Ascending aorta (tissue), 2 donors: ENCODE measurements at regions of chr16 and their contacts with region 1.

Region 1: DNA sequence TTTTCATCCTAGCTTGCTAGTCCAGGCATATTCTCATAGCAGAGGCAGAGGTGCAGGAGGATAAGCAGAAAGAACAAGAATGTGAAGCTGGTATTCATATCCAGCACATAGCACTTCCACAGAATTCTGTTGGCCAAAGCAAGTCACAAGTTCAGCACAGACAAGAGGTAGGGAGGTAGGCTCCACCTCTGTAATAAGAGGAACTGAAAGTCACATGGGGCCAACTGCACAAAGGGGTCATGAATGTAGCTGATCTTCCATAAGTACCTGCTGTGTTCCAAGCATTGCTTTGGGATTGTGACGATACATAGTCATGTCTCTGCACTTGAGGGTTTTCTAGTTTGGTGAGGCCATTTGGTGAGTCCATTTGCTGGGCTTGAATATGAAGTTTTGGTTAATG is 110.8 kb upstream of the MPHOSPH6 start:
- DNase-seq: no peak
- H3K4me3 ChIP-seq: no peak overlapping the region
- H3K27ac ChIP-seq: peak overlapping the region; percentile 46 to 73
- H3K4me1 ChIP-seq: peaks cover 0 to 22% of the 10 kb centered on the region in 2 donors
- H3K27me3 ChIP-seq: no peaks in the 10 kb centered on the region
- CTCF ChIP-seq: no peak

Region 2: DNA sequence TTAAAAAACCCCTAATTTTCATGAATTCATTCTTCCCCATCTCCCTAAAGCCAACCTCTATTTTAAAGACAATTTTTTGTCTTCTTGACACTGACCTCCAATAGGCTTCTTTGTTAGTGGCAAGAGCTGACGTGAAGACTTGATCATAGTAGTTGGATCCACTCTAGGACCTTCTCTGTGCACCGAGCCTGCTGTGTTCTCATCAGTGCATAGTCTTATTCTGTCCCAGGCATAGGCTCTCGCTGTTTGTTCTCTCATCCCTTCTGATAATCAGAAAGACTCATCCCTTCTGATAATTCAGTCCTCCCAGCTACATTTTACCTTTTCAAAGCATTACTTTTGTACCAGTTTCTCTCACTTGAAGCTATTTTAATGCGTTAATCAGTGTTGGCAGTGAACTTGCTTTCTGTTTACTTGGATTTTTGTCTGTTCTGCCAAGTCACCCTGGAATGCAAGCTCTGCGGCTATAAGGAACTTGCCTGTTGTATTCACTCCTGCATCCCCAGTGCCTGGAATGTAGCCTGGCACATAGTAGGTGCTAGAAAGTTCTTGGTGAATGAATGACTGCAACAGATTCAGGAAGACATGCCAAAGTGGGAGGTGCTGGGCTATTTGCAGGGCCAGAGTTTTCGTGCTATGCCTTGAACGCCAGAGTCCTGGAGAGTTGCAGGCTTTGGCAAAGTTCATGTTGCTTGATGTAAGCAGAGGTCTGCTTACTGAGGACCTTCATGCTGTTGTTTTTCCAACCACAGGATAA is 36.7 kb after region 1 on chr16:
- intact Hi-C with region 1: loop called (anchors 2 kb)
- DNase-seq: no peak
- H3K4me3 ChIP-seq: no peak overlapping the region
- H3K27ac ChIP-seq: peak overlapping the region; percentile 19 to 28
- H3K4me1 ChIP-seq: peaks cover 0 to 9% of the 10 kb centered on the region in 2 donors
- H3K27me3 ChIP-seq: no peaks in the 10 kb centered on the region
- CTCF ChIP-seq: no peak